CD4-positive, alpha-beta T cell (primary cell): ENCODE measurements at regions of chr1 and their contacts with region 1.

Region 1: GRCh38 chr1:26695356-26696118 is at the start of gene ARID1A:
- DNase-seq: peak; percentile 93 to 98 (median 95)
- ATAC-seq: peak; percentile 60
- H3K4me3 ChIP-seq: peak within 1 kb of the TSS; percentile 89
- H3K4me3 Mint-ChIP-seq: peak within 1 kb of the TSS; percentile 92
- H3K27ac ChIP-seq: peak within 1 kb of the TSS; percentile 71 to 88
- H3K27ac Mint-ChIP-seq: peak within 1 kb of the TSS; percentile 96
- H3K4me1 ChIP-seq: peaks cover 40% of the 10 kb centered on the region
- H3K4me1 Mint-ChIP-seq: peaks cover 36% of the 10 kb centered on the region
- H3K27me3 ChIP-seq: no peaks in the 10 kb centered on the region
- H3K27me3 Mint-ChIP-seq: no peaks in the 10 kb centered on the region
- CTCF ChIP-seq: no peak
- total RNA-seq, gene ARID1A: 102 to 103 TPM

Region 2: GRCh38 chr1:26472901-26473845 is 222.4 kb before region 1 on chr1:
- CTCF ChIA-PET with region 1: no interaction called
- POLR2A ChIA-PET with region 1: interaction called, 10 read pairs
- intact Hi-C with region 1: no loop called
- DNase-seq: peak; percentile 93 to 99 (median 96)
- ATAC-seq: peak; percentile 77
- H3K4me3 ChIP-seq: peak overlapping the region; percentile 78
- H3K4me3 Mint-ChIP-seq: peak overlapping the region; percentile 89
- H3K27ac ChIP-seq: peak overlapping the region; percentile 90 to 95
- H3K27ac Mint-ChIP-seq: peak overlapping the region; percentile 99
- H3K4me1 ChIP-seq: peaks cover 36% of the 10 kb centered on the region
- H3K4me1 Mint-ChIP-seq: peaks cover 53% of the 10 kb centered on the region
- H3K27me3 ChIP-seq: no peaks in the 10 kb centered on the region
- H3K27me3 Mint-ChIP-seq: no peaks in the 10 kb centered on the region
- CTCF ChIP-seq: no peak

Region 3: GRCh38 chr1:26602378-26602959 is 93.1 kb before region 1 on chr1:
- CTCF ChIA-PET with region 1: interaction called, 20 read pairs
- POLR2A ChIA-PET with region 1: interaction called, 11 read pairs
- intact Hi-C with region 1: loop called in 1 of 2 experiments (anchors 5 kb)
- DNase-seq: peak in 10 of 14 experiments; percentile 4 to 83 (median 30)
- ATAC-seq: peak; percentile 79
- H3K4me3 ChIP-seq: no peak overlapping the region
- H3K4me3 Mint-ChIP-seq: no peak overlapping the region
- H3K27ac ChIP-seq: no peak overlapping the region
- H3K27ac Mint-ChIP-seq: no peak overlapping the region
- H3K4me1 ChIP-seq: no peaks in the 10 kb centered on the region
- H3K4me1 Mint-ChIP-seq: peaks cover 14% of the 10 kb centered on the region
- H3K27me3 ChIP-seq: no peaks in the 10 kb centered on the region
- H3K27me3 Mint-ChIP-seq: no peaks in the 10 kb centered on the region
- CTCF ChIP-seq: peak; percentile 97

Region 4: DNA sequence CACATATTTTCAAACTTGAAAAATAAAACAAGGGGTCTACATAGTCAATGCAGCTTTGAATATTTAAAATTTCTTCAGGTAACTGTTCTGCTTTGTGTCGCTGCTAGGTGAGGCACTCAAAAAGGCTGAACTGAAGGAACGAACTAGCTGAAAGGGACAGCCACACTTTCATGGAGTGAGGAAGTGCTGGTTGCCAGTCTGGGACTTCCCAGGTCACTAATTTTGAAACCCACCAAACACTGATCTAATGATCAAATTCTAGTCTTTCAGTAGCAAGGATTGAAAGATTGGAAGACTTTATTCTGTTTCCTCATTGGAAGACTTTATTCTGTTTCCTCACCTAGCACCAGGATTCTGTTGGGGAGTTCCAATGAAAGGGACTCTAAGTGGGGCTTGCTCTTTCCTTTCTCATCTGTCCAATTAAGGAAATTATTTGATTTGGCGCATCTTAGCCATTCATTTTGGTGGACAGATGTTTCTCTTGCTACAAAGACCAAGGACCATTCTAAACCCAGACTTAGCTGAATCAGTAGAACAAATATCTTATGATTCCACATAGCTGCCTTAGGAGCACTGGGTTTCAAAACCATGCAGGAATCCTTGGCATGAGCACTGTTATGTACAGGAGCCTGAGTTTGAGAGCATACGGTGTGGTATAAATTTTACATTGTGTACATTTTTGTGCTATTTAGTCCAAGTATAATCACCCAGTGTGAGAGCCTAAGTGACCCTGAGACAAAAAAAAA is 10.6 kb before region 1 on chr1:
- CTCF ChIA-PET with region 1: interaction called, 6 read pairs
- POLR2A ChIA-PET with region 1: interaction called, 34 read pairs
- intact Hi-C with region 1: no loop called
- DNase-seq: no peak
- ATAC-seq: no peak
- H3K4me3 ChIP-seq: no peak overlapping the region
- H3K4me3 Mint-ChIP-seq: no peak overlapping the region
- H3K27ac ChIP-seq: no peak overlapping the region
- H3K27ac Mint-ChIP-seq: no peak overlapping the region
- H3K4me1 ChIP-seq: peaks cover 7% of the 10 kb centered on the region
- H3K4me1 Mint-ChIP-seq: peaks cover 9% of the 10 kb centered on the region
- H3K27me3 ChIP-seq: no peaks in the 10 kb centered on the region
- H3K27me3 Mint-ChIP-seq: no peaks in the 10 kb centered on the region
- CTCF ChIP-seq: no peak

Region 5: DNA sequence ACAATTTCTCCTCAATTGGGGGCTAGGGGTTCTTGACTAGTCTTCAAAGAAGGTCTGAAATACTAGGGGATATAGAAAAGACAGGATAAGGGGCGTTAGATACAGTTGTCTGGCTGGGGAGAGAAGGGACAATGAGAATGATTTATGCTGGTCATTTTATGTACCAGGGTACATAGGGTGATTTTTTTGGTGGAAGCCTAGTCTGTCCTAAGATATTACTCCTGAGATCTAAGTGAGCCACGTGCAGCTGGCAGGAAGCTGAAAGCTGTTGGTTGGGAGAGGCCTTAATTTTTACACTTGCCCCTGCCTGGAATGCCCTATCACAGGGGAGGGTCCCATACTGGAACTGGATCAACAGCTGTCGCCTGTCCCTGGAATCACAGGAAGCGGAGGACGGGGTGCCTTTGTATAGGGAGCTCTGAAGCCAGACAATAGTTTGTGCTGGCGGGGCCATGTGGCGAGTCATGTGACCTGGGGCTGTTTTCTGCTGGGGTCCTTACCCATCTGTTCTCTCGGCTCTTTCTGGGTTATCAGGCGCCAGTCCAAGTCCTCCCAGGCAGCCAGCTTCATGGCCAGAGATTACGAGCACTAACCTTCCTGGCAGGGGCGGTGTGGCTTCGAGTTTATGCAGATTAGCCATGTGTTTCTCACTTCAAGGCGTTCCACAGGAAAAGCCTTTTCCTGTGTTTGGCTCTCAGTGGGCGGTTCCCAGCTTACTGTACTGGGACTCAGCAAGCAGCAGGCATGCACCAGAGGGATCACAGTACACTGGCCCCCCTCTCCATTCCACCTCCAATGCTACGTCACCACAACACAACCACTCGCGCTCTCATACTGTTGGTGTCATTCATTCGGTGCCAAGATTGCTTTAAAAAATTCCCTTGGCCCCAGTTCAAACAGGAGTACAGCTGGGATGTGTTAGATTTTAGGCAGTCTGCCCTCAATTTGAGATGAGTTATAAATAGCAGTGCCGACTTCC is 27.8 kb after region 1 on chr1:
- CTCF ChIA-PET with region 1: interaction called, 12 read pairs
- POLR2A ChIA-PET with region 1: interaction called, 29 read pairs
- intact Hi-C with region 1: loop called in 1 of 2 experiments (anchors 2 kb)
- DNase-seq: peak; percentile 6 to 81 (median 37)
- ATAC-seq: peak; percentile 77
- H3K4me3 ChIP-seq: peak overlapping the region; percentile 23
- H3K4me3 Mint-ChIP-seq: peak overlapping the region; percentile 83
- H3K27ac ChIP-seq: peak overlapping the region; percentile 25 to 62
- H3K27ac Mint-ChIP-seq: peak overlapping the region; percentile 85
- H3K4me1 ChIP-seq: peaks cover 75% of the 10 kb centered on the region
- H3K4me1 Mint-ChIP-seq: peaks cover 91% of the 10 kb centered on the region
- H3K27me3 ChIP-seq: no peaks in the 10 kb centered on the region
- H3K27me3 Mint-ChIP-seq: no peaks in the 10 kb centered on the region
- CTCF ChIP-seq: no peak

Region 6: DNA sequence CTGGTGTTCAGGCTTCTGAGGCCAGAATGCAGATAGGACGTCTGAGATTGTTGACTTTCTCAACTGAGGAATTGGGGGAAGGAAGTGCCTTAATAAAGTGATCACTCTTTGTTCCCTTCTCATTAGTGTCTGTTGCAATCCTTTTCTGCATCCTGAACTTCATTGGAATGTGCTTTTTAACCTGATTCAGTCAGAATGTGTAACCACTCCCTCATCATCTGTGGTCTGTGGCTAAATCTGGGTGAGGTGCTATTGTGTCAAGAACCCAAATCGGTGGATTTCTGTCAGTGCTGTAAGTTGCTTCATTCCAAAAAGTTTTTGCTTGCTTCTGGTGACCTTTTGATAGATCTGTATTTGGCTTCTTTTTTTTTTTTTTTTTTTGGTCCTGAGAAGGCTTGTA is 38.4 kb after region 1 on chr1:
- CTCF ChIA-PET with region 1: interaction called, 12 read pairs
- POLR2A ChIA-PET with region 1: interaction called, 202 read pairs
- intact Hi-C with region 1: no loop called
- DNase-seq: peak in 4 of 14 experiments; percentile 25 to 59 (median 50)
- ATAC-seq: peak; percentile 52
- H3K4me3 ChIP-seq: no peak overlapping the region
- H3K4me3 Mint-ChIP-seq: no peak overlapping the region
- H3K27ac ChIP-seq: no peak overlapping the region
- H3K27ac Mint-ChIP-seq: peak overlapping the region; percentile 84
- H3K4me1 ChIP-seq: peaks cover 50% of the 10 kb centered on the region
- H3K4me1 Mint-ChIP-seq: peaks cover 68% of the 10 kb centered on the region
- H3K27me3 ChIP-seq: no peaks in the 10 kb centered on the region
- H3K27me3 Mint-ChIP-seq: no peaks in the 10 kb centered on the region
- CTCF ChIP-seq: no peak

Region 7: DNA sequence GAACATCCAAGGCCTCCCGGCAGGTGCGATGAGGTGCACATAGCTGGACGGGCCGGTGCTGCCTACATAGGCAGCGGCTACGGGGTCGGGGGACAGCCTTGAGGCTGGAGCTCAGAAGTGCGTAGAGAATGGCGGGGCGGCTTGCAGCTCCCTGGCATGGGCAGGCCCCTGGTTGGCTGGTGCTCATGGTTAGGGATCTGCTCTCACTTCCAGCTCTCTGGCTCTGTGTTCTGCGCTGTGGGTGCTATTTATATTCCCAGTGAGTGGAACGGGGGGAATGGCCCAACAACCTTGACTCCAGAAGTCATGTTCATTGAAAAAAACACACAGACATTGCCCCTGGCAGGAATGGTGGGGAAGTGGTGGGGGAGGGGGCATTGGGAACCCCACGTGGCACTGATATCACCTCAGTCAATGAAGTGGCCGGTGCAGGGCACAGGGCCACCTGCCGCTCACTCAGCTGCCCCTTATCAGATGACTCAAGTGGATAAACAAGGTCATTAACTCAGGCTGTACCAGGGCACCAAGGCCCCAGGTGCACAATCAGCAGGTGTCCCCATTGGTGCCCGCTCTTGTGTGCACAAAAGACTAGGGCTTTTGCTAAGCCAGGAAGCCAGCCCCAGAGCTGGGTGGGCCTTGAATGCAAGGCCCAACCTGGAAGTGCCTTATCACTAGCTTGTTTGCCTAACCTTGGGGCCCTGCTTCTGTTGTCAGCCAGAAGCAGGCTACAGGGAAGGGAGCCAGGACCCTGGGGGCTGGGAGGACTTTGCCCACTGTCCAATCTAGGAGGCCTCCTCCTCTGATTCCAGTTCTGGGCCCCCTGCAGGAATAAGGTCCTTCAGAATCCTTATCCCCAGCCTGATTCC is 218.4 kb after region 1 on chr1 and contains the start of gene NR0B2:
- CTCF ChIA-PET with region 1: no interaction called
- POLR2A ChIA-PET with region 1: no interaction called
- intact Hi-C with region 1: no loop called
- DNase-seq: no peak
- ATAC-seq: no peak
- H3K4me3 ChIP-seq: no peak within 1 kb of the TSS
- H3K4me3 Mint-ChIP-seq: no peak within 1 kb of the TSS
- H3K27ac ChIP-seq: no peak within 1 kb of the TSS
- H3K27ac Mint-ChIP-seq: no peak within 1 kb of the TSS
- H3K4me1 ChIP-seq: no peaks in the 10 kb centered on the region
- H3K4me1 Mint-ChIP-seq: no peaks in the 10 kb centered on the region
- H3K27me3 ChIP-seq: no peaks in the 10 kb centered on the region
- H3K27me3 Mint-ChIP-seq: peaks cover 4% of the 10 kb centered on the region
- CTCF ChIP-seq: no peak
- total RNA-seq, gene NR0B2: not detected

Region 8: GRCh38 chr1:28235755-28236655 is 1540.5 kb after region 1 on chr1 and contains the start of gene ATP5IF1:
- CTCF ChIA-PET with region 1: no interaction called
- POLR2A ChIA-PET with region 1: no interaction called
- intact Hi-C with region 1: no loop called
- DNase-seq: peak; percentile 87 to 98 (median 92)
- ATAC-seq: peak; percentile 96
- H3K4me3 ChIP-seq: peak within 1 kb of the TSS; percentile 97
- H3K4me3 Mint-ChIP-seq: no peak within 1 kb of the TSS
- H3K27ac ChIP-seq: peak within 1 kb of the TSS; percentile 80 to 81
- H3K27ac Mint-ChIP-seq: no peak within 1 kb of the TSS
- H3K4me1 ChIP-seq: peaks cover 48% of the 10 kb centered on the region
- H3K4me1 Mint-ChIP-seq: peaks cover 19% of the 10 kb centered on the region
- H3K27me3 ChIP-seq: no peaks in the 10 kb centered on the region
- H3K27me3 Mint-ChIP-seq: no peaks in the 10 kb centered on the region
- CTCF ChIP-seq: no peak
- total RNA-seq, gene ATP5IF1: 77.4 to 78.0 TPM